B cell (primary cell): ENCODE measurements at regions of chr2 and their contacts with region 1.

Region 1: DNA sequence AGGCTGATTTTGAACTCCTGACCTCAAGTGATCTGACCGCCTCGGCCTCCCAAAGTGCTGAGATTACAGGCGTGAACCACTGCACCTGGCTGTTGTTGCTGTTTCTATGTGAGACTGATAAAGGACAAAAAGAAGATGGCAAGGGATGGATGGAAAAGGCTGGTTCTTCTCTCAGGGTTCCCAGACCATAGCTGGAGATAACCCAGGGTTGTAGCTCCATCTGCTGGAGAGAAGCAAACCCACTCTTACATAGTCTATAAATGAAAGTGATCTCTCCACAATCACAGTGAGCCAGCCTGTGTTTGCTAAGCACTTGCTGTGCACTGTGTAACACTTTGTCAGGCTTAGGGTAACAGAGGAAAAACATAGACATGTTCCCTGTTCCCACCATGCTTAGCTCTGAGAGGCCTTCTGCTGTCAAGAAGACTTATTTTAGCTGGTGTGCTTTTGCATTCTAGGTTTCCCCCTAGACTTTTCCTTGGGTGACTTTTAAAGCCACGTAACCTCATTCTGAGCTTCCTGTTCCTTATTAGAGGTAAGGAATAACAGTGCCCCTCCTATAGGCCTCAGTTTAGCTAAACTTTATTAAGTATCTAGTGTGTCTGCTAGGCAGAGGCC is 49.7 kb downstream of the LIMS1 start:
- DNase-seq: peak; percentile 79
- ATAC-seq: peak; percentile 60
- H3K4me3 ChIP-seq: no peak overlapping the region
- H3K4me3 Mint-ChIP-seq: no peak overlapping the region
- H3K27ac ChIP-seq: peak overlapping the region in 1 of 2 donors; percentile 34
- H3K27ac Mint-ChIP-seq: peak overlapping the region; percentile 57
- H3K4me1 ChIP-seq: peaks cover 31 to 46% of the 10 kb centered on the region in 2 donors
- H3K4me1 Mint-ChIP-seq: peaks cover 55% of the 10 kb centered on the region
- H3K27me3 ChIP-seq: no peaks in the 10 kb centered on the region
- H3K27me3 Mint-ChIP-seq: no peaks in the 10 kb centered on the region
- CTCF ChIP-seq: peak; percentile 82

Region 2: GRCh38 chr2:107570876-107571275 is 1013.1 kb before region 1 on chr2:
- CTCF ChIA-PET with region 1: no interaction called
- POLR2A ChIA-PET with region 1: no interaction called
- intact Hi-C with region 1: loop called (anchors 10 kb)
- DNase-seq: no peak
- ATAC-seq: no peak
- H3K4me3 ChIP-seq: no peak overlapping the region
- H3K4me3 Mint-ChIP-seq: no peak overlapping the region
- H3K27ac ChIP-seq: no peak overlapping the region
- H3K27ac Mint-ChIP-seq: no peak overlapping the region
- H3K4me1 ChIP-seq: no peaks in the 10 kb centered on the region
- H3K4me1 Mint-ChIP-seq: no peaks in the 10 kb centered on the region
- H3K27me3 ChIP-seq: no peaks in the 10 kb centered on the region
- H3K27me3 Mint-ChIP-seq: no peaks in the 10 kb centered on the region
- CTCF ChIP-seq: no peak

Region 3: GRCh38 chr2:108448678-108449493 is 135.1 kb before region 1 on chr2 and contains the start of gene GCC2:
- CTCF ChIA-PET with region 1: no interaction called
- POLR2A ChIA-PET with region 1: no interaction called
- intact Hi-C with region 1: loop called (anchors 1 kb)
- DNase-seq: peak; percentile 98
- ATAC-seq: peak; percentile 96
- H3K4me3 ChIP-seq: peak within 1 kb of the TSS; percentile 87 to 99 (median 95)
- H3K4me3 Mint-ChIP-seq: peak within 1 kb of the TSS; percentile 100
- H3K27ac ChIP-seq: peak within 1 kb of the TSS; percentile 94 to 98
- H3K27ac Mint-ChIP-seq: peak within 1 kb of the TSS; percentile 98
- H3K4me1 ChIP-seq: peaks cover 19 to 20% of the 10 kb centered on the region in 2 donors
- H3K4me1 Mint-ChIP-seq: peaks cover 43% of the 10 kb centered on the region
- H3K27me3 ChIP-seq: no peaks in the 10 kb centered on the region
- H3K27me3 Mint-ChIP-seq: no peaks in the 10 kb centered on the region
- CTCF ChIP-seq: no peak
- total RNA-seq, gene GCC2: 87.9 and 97.3 TPM in 2 replicates

Region 4: DNA sequence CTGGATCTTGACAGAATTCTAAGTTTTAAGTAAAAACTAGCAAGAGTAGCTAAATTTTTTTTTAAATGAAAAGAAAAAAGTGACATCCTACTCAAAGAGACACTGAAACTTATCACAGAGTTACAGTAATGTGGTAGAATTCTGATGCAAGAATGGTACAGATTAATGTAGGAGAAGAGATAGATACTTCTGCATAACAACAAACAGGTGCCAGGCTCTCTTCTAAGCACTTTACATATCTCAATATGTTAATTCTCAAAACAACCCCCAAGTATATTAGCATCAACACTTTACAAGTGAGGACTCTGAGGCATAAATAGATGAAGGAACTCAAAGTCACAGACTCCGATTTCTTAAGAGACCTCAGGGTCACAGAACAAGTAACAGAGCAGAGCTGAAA is 106.9 kb before region 1 on chr2:
- CTCF ChIA-PET with region 1: no interaction called
- POLR2A ChIA-PET with region 1: no interaction called
- intact Hi-C with region 1: loop called (anchors 10 kb)
- DNase-seq: no peak
- ATAC-seq: no peak
- H3K4me3 ChIP-seq: no peak overlapping the region
- H3K4me3 Mint-ChIP-seq: no peak overlapping the region
- H3K27ac ChIP-seq: no peak overlapping the region
- H3K27ac Mint-ChIP-seq: no peak overlapping the region
- H3K4me1 ChIP-seq: no peaks in the 10 kb centered on the region
- H3K4me1 Mint-ChIP-seq: no peaks in the 10 kb centered on the region
- H3K27me3 ChIP-seq: no peaks in the 10 kb centered on the region
- H3K27me3 Mint-ChIP-seq: no peaks in the 10 kb centered on the region
- CTCF ChIP-seq: no peak

Region 5: GRCh38 chr2:108594132-108594981 is 10.3 kb after region 1 on chr2:
- CTCF ChIA-PET with region 1: interaction called, 21 read pairs
- POLR2A ChIA-PET with region 1: no interaction called
- intact Hi-C with region 1: no loop called
- DNase-seq: peak; percentile 62
- ATAC-seq: peak; percentile 69
- H3K4me3 ChIP-seq: no peak overlapping the region
- H3K4me3 Mint-ChIP-seq: peak overlapping the region; percentile 62
- H3K27ac ChIP-seq: peak overlapping the region in 1 of 2 donors; percentile 24
- H3K27ac Mint-ChIP-seq: peak overlapping the region; percentile 77
- H3K4me1 ChIP-seq: peaks cover 49 to 50% of the 10 kb centered on the region in 2 donors
- H3K4me1 Mint-ChIP-seq: peaks cover 69% of the 10 kb centered on the region
- H3K27me3 ChIP-seq: no peaks in the 10 kb centered on the region
- H3K27me3 Mint-ChIP-seq: no peaks in the 10 kb centered on the region
- CTCF ChIP-seq: no peak

Region 6: DNA sequence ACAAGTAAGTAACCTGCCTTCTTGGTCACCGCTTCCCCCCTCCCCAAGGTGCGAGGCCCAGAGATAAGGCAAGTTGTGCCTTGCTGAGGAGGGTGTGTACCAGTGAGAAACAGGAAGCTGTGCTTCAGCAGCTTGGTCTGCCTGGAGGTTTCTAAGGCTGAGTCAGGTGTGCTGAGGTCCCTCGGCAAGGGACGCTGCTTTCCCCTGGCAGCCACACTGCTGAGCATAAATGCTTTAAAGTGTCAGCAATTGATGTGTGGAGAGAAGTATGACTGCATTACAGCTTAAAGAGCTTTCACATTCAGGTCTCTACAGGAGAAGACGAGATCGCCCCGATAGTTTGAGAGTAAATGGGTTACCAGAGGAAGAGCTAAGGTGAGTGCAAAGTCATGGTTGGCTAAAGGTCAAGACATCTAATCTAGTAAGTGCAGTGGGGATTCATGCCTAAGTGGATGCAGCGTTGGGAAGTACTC is 37.1 kb after region 1 on chr2:
- CTCF ChIA-PET with region 1: interaction called, 11 read pairs
- POLR2A ChIA-PET with region 1: no interaction called
- intact Hi-C with region 1: no loop called
- DNase-seq: peak; percentile 81
- ATAC-seq: peak; percentile 99
- H3K4me3 ChIP-seq: peak overlapping the region in 4 of 5 experiments; percentile 30 to 72 (median 42)
- H3K4me3 Mint-ChIP-seq: peak overlapping the region; percentile 77
- H3K27ac ChIP-seq: peak overlapping the region; percentile 58 to 69
- H3K27ac Mint-ChIP-seq: peak overlapping the region; percentile 84
- H3K4me1 ChIP-seq: peaks cover 51 to 53% of the 10 kb centered on the region in 2 donors
- H3K4me1 Mint-ChIP-seq: peaks cover 53% of the 10 kb centered on the region
- H3K27me3 ChIP-seq: no peaks in the 10 kb centered on the region
- H3K27me3 Mint-ChIP-seq: no peaks in the 10 kb centered on the region
- CTCF ChIP-seq: no peak

Region 7: GRCh38 chr2:108637304-108637669 is 53.3 kb after region 1 on chr2:
- CTCF ChIA-PET with region 1: interaction called, 24 read pairs
- POLR2A ChIA-PET with region 1: no interaction called
- intact Hi-C with region 1: no loop called
- DNase-seq: no peak
- ATAC-seq: no peak
- H3K4me3 ChIP-seq: no peak overlapping the region
- H3K4me3 Mint-ChIP-seq: no peak overlapping the region
- H3K27ac ChIP-seq: no peak overlapping the region
- H3K27ac Mint-ChIP-seq: no peak overlapping the region
- H3K4me1 ChIP-seq: peaks cover 4 to 6% of the 10 kb centered on the region in 2 donors
- H3K4me1 Mint-ChIP-seq: peaks cover 15% of the 10 kb centered on the region
- H3K27me3 ChIP-seq: no peaks in the 10 kb centered on the region
- H3K27me3 Mint-ChIP-seq: peaks cover 5% of the 10 kb centered on the region
- CTCF ChIP-seq: no peak